ENCODE measurements at regions of chr19 and their contacts with region 1.

Region 1: GRCh38 chr19:14107581-14108461 is 9.7 kb downstream of the PRKACA start:
- DNase-seq: peak in 1 of 2 donors; percentile 81
- ATAC-seq: peak; percentile 66 to 78
- H3K4me3 ChIP-seq: peak overlapping the region in 1 of 4 donors; percentile 21
- H3K27ac ChIP-seq: peak overlapping the region; percentile 79 to 97 (median 86)
- H3K4me1 ChIP-seq: peaks cover 26 to 51% of the 10 kb centered on the region in 2 donors
- H3K27me3 ChIP-seq: no peaks in the 10 kb centered on the region
- CTCF ChIP-seq: no peak
- POLR2A ChIP-seq: no peak

Region 2: DNA sequence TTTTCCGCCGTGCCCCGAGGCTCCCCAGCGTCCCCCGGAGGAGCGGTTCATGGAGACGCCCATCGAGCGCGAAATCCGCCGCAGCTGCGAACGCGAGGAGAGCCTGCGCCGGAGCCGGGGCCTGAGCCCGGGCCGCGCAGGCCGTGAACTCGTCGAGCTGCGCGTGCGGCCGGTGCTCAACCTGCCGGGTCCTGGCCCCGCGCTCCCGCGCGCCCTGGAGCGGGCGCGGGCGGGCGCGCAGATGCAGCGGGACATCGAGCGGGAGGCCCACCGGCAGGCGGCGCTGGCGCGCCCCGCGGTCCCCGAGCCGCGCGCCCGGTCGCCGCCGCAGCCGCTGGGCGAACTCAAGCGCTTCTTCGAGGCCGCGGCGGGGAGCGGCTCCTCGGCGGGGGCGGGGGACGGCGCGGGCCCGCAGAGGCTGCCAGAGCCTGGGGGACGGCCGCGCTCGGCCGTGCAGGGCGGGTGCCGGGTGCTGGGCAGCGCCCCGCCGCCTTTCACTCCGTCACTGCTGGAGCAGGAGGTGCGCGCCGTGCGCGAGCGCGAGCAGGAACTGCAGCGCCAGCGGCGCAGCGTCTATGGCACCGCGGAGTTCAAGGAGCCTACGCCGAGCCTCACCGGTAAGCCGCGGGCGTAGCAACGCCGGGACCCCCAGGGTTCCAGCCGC is 34.4 kb before region 1 on chr19:
- in situ Hi-C with region 1: no loop called
- intact Hi-C with region 1: no loop called
- DNase-seq: peak in 1 of 2 donors; percentile 62
- ATAC-seq: peak; percentile 64 to 77
- H3K4me3 ChIP-seq: peak overlapping the region; percentile 71 to 93 (median 74)
- H3K27ac ChIP-seq: peak overlapping the region; percentile 86 to 97 (median 90)
- H3K4me1 ChIP-seq: peaks cover 20 to 32% of the 10 kb centered on the region in 2 donors
- H3K27me3 ChIP-seq: no peaks in the 10 kb centered on the region
- CTCF ChIP-seq: peak in 4 of 5 experiments; percentile 83 to 96 (median 92)
- POLR2A ChIP-seq: peak; percentile 19 to 60

Region 3: DNA sequence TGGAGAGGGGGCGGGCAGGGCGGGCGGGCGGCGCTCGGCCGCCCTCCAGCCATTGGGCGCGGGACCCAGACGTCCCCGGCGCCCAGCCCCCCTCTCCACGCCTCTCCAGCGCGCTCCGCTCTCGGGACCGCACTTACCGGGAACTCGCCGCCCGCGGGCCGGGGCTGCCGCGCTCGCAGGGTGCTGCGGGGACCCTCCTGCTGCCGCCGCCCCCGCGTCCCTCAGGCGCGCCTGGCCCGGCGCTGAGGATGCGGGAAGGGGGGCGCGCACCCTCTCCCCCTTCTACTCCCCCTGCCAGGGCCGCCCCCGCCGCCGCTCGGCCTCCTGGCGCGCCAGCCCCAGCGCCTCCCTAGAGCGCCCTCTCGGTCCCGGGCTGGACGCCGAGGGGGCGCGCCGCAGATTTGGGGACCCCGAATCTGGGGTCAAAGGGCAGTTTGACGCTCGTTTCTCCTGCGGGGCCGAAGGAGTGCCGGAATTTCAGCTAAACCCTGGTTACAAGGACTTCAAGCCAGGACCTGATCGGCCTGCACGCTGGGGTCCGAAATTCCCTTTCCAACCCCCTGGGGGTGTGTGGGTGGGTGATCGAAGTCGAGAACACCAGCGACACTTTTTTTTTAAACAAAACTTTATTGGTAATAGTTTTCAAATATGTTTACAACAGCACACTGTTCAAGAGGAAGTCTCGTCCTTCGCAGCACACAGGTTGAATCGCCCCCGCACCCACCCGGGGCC is 16.6 kb before region 1 on chr19:
- in situ Hi-C with region 1: no loop called
- intact Hi-C with region 1: loop called (anchors 2 kb)
- DNase-seq: peak in 1 of 2 donors; percentile 36
- ATAC-seq: peak; percentile 69 to 70
- H3K4me3 ChIP-seq: peak overlapping the region; percentile 63 to 89 (median 74)
- H3K27ac ChIP-seq: peak overlapping the region; percentile 89 to 96 (median 92)
- H3K4me1 ChIP-seq: peaks cover 0 to 5% of the 10 kb centered on the region in 2 donors
- H3K27me3 ChIP-seq: no peaks in the 10 kb centered on the region
- CTCF ChIP-seq: peak in 3 of 5 experiments; percentile 22 to 36 (median 36)
- POLR2A ChIP-seq: peak; percentile 90 to 94

Region 4: DNA sequence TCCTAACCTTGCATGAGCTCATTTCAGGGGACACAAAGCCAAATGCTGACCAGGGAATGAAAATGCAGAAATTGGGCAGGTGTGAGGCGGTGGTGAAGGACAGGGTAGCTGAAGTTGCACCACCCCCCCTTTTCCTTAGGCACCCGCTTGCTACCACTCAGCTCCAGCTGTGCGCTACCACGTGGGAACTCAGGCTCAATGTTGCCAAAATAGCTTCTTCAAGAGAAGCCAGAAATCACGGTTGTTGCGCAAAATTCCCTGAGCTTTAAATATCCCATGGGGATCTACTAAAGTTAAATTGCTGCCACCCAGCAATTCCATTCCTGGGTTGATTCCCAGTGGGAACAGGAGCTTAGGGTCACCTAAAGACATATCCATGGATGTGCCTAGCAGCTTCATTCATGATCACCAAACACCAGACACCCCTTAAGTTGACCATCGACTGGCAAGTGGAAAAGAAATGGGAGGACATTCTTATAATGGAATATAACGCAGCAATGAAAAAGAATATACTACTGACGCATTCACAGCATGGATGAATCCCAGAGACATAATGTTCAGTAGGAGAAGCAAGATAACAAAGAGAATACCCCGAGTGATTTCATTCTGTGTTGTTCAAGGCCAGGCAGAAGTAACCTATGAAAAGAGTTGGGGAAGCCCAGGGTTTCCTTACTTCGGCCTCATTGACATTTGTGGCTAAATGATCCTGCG is 111.0 kb after region 1 on chr19:
- in situ Hi-C with region 1: no loop called
- intact Hi-C with region 1: no loop called
- DNase-seq: no peak
- ATAC-seq: no peak
- H3K4me3 ChIP-seq: no peak overlapping the region
- H3K27ac ChIP-seq: no peak overlapping the region
- H3K4me1 ChIP-seq: no peaks in the 10 kb centered on the region
- H3K27me3 ChIP-seq: peaks cover 0 to 10% (median 0%) of the 10 kb centered on the region in 3 donors
- CTCF ChIP-seq: no peak
- POLR2A ChIP-seq: no peak

Region 5: DNA sequence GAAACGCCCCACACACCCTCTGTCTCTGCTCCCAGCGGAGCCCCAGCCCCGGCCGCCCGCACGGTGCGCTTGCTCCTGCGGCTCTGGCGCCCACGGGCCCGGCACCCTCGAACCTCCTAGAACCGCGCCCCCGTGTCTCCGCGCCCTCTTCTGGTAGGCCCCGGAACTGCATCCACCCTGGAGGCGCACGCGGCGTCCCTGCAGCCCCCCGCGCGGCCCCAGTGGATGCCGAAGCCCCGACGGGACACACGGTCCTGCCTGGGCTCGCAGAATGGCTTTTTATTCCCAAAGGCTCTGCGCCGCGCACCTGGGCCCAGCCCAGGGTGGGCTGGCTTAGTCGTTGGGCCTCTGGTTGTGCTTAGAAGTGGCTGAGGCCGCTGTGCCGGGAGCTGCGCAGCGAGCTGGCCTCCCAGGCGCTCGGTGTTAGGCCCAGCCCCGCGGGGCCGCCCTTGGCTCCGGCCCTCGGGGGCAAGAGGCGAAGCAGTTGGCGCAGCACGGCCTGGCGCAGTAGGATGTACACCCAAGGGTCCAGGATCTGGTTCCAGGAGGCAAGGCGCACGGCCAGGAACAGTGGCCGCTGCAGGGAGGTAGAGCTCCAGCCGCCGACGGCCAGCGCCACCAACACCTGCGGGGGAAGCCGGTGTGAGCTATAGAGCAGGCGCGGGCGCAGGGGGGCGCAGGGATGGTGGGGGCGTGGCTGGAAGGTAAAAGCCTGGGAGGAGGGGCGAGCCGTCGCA is 364.5 kb after region 1 on chr19:
- in situ Hi-C with region 1: no loop called
- intact Hi-C with region 1: no loop called
- DNase-seq: no peak
- ATAC-seq: peak in 1 of 2 donors; percentile 71
- H3K4me3 ChIP-seq: peak overlapping the region in 3 of 4 donors; percentile 16 to 28 (median 25)
- H3K27ac ChIP-seq: no peak overlapping the region
- H3K4me1 ChIP-seq: peaks cover 5 to 15% of the 10 kb centered on the region in 2 donors
- H3K27me3 ChIP-seq: peaks cover 27 to 39% (median 28%) of the 10 kb centered on the region in 3 donors
- CTCF ChIP-seq: peak; percentile 77 to 97 (median 93)
- POLR2A ChIP-seq: no peak

Measured in gastrocnemius medialis (tissue), 4 donors.